ENCODE measurements at regions of chr4 and their contacts with region 1.

Region 1: GRCh38 chr4:52983563-52984303 is 121.6 kb downstream of the RASL11B start:
- DNase-seq: peak; percentile 67
- ATAC-seq: peak; percentile 82
- H3K4me3 ChIP-seq: no peak overlapping the region
- H3K27ac ChIP-seq: no peak overlapping the region
- H3K4me1 ChIP-seq: peaks cover 13% of the 10 kb centered on the region
- H3K27me3 ChIP-seq: no peaks in the 10 kb centered on the region
- CTCF ChIP-seq: peak; percentile 64
- EP300 ChIP-seq: no peak
- POLR2A ChIP-seq: no peak
- RAD21 ChIP-seq: no peak

Region 2: GRCh38 chr4:52234561-52235440 is 748.9 kb before region 1 on chr4:
- CTCF ChIA-PET with region 1: interaction called, 20 read pairs
- POLR2A ChIA-PET with region 1: no interaction called
- in situ Hi-C with region 1: loop called (anchors 5 kb)
- intact Hi-C with region 1: loop called (anchors 1 kb)
- DNase-seq: peak; percentile 50
- ATAC-seq: peak; percentile 79
- H3K4me3 ChIP-seq: no peak overlapping the region
- H3K27ac ChIP-seq: no peak overlapping the region
- H3K4me1 ChIP-seq: no peaks in the 10 kb centered on the region
- H3K27me3 ChIP-seq: no peaks in the 10 kb centered on the region
- CTCF ChIP-seq: peak; percentile 67
- EP300 ChIP-seq: no peak
- POLR2A ChIP-seq: no peak
- RAD21 ChIP-seq: peak; percentile 30; the same call in 1 of the 2 replicates

Region 3: DNA sequence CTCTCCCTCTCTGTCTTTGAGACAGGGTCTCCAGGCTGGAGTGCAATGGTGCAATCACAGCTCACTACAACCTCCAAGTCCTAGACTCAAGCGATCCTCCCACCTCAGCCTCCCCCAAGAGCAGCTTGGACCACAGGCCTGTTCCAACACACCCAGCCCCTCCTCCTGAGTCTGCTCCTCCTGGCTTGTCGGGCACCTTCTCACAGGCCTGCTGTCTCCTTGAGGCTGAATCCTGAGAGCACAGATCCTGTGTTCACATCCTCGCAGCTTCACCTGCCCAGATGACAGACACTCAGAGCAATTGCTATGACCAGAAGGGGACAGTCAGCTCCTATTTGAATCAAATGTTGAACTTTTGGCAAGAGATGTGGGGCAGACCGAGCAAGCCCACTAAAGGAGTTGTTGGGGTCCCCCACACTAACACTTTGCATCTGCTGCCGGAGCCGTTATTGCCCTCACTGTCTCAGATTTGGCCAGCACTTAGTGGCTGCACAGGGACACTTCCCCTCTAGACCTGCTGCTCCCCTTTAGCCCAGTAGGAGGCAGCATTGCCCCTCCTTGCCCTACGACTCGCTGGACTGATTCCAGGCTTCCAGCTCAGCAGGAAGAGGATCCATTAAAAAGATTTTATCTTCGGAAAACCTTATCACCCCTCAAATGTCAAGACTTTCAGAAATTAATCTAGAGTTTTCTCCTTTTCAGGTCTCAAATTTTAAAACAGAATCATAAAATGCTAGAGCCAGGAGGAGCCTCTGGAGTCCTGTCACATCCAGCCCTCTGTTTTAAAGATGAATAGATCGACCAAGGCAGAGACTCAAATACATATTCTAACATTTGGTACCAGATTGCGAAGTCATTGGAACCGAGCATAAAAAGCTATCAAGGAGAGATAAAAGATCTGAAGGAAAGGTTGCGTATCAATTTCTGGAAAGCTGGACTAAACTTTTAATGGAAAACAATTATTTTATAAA is 438.3 kb before region 1 on chr4:
- CTCF ChIA-PET with region 1: interaction called, 26 read pairs
- POLR2A ChIA-PET with region 1: no interaction called
- in situ Hi-C with region 1: loop called (anchors 5 kb)
- intact Hi-C with region 1: loop called (anchors 2 kb)
- DNase-seq: peak; percentile 49
- ATAC-seq: peak; percentile 97
- H3K4me3 ChIP-seq: no peak overlapping the region
- H3K27ac ChIP-seq: no peak overlapping the region
- H3K4me1 ChIP-seq: no peaks in the 10 kb centered on the region
- H3K27me3 ChIP-seq: no peaks in the 10 kb centered on the region; a peak in 1 of 5 replicates
- CTCF ChIP-seq: peak; percentile 88
- EP300 ChIP-seq: no peak
- POLR2A ChIP-seq: no peak
- RAD21 ChIP-seq: peak; percentile 79

Region 4: GRCh38 chr4:52712172-52712990 is 271.4 kb before region 1 on chr4:
- CTCF ChIA-PET with region 1: no interaction called
- POLR2A ChIA-PET with region 1: no interaction called
- in situ Hi-C with region 1: loop called (anchors 25 kb)
- intact Hi-C with region 1: no loop called
- DNase-seq: peak; percentile 92
- ATAC-seq: peak; percentile 96
- H3K4me3 ChIP-seq: peak overlapping the region; percentile 76 to 83 (median 83)
- H3K27ac ChIP-seq: peak overlapping the region; percentile 91
- H3K4me1 ChIP-seq: peaks cover 45% of the 10 kb centered on the region
- H3K27me3 ChIP-seq: peaks cover 0 to 1% of the 10 kb centered on the region in 2 experiments; a peak in 1 of 5 replicates
- CTCF ChIP-seq: no peak
- EP300 ChIP-seq: no peak; a peak in 1 of 4 replicates
- POLR2A ChIP-seq: peak; percentile 92 to 93
- RAD21 ChIP-seq: peak; percentile 66; the same call in 1 of the 2 replicates

Region 5: DNA sequence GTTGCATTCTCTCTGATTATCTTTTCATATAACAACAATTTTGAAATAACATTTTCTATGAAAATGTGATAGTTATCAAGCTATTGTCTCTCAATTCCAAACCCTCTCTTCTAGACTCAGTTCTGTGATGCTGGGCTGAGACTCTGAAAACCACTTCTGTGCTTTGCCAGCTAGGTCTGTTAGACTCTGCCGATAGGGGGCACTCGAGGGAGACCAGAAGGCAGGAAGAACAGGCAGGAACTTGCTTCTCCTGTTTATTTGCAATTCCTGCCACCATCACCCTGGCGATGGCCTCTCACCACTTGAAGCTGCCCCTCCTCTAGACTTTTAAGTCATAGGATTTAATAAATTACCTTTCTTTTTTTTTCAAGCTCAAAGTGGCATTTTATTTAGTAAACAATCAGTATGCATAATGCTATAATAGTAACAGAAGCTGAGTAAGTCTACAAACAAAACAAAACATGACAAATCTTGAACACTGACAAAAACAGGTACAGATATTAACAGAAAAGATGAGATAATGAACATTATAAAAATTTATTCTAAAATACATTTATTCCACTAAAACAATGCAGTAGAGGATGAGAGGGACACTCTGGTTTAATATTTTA is 71.9 kb before region 1 on chr4:
- CTCF ChIA-PET with region 1: interaction called, 4 read pairs
- POLR2A ChIA-PET with region 1: interaction called, 3 read pairs
- in situ Hi-C with region 1: no loop called
- intact Hi-C with region 1: loop called (anchors 2 kb)
- DNase-seq: peak; percentile 75
- ATAC-seq: peak; percentile 82
- H3K4me3 ChIP-seq: no peak overlapping the region
- H3K27ac ChIP-seq: no peak overlapping the region
- H3K4me1 ChIP-seq: peaks cover 33% of the 10 kb centered on the region
- H3K27me3 ChIP-seq: no peaks in the 10 kb centered on the region
- CTCF ChIP-seq: peak; percentile 73
- EP300 ChIP-seq: no peak
- POLR2A ChIP-seq: no peak
- RAD21 ChIP-seq: 0 out of 2 replicates have a peak, but pooled peaks have one; percentile 12

Region 6: GRCh38 chr4:53088152-53088551 is 104.4 kb after region 1 on chr4:
- CTCF ChIA-PET with region 1: no interaction called
- POLR2A ChIA-PET with region 1: no interaction called
- in situ Hi-C with region 1: no loop called
- intact Hi-C with region 1: no loop called
- DNase-seq: no peak
- ATAC-seq: no peak
- H3K4me3 ChIP-seq: no peak overlapping the region
- H3K27ac ChIP-seq: no peak overlapping the region
- H3K4me1 ChIP-seq: no peaks in the 10 kb centered on the region
- H3K27me3 ChIP-seq: no peaks in the 10 kb centered on the region
- CTCF ChIP-seq: no peak
- EP300 ChIP-seq: no peak
- POLR2A ChIP-seq: no peak
- RAD21 ChIP-seq: no peak

Measured in HepG2 (cell line).